Astrocyte of the cerebellum (primary cell): ENCODE measurements at regions of chr18 and their contacts with region 1.

Region 1: DNA sequence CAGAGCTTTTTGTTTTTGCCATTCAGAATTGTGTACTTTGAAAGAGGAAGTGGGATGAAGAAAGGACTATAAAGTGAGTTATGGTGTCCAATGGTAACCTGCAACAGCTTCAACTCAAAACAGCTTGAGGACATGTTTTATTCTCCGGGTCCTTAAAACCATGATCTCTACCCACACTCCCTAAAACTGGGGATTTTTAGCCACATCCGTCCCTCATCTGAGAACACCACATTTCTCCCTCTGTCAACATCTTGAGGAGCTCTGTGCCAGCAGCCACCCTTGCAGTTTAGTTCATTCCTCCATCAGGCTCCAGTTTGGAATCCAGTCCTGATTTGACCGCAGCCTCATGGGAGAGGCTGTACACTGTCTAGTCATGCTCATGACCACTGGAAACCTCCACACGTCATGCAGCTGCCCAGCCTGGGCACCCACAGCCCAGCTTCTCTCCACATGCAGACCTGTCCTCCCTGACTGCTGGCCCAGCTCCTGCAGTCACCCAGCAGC is 62.6 kb downstream of the C18orf63 start:
- DNase-seq: no peak
- H3K4me3 ChIP-seq: no peak overlapping the region
- CTCF ChIP-seq: no peak

Region 2: DNA sequence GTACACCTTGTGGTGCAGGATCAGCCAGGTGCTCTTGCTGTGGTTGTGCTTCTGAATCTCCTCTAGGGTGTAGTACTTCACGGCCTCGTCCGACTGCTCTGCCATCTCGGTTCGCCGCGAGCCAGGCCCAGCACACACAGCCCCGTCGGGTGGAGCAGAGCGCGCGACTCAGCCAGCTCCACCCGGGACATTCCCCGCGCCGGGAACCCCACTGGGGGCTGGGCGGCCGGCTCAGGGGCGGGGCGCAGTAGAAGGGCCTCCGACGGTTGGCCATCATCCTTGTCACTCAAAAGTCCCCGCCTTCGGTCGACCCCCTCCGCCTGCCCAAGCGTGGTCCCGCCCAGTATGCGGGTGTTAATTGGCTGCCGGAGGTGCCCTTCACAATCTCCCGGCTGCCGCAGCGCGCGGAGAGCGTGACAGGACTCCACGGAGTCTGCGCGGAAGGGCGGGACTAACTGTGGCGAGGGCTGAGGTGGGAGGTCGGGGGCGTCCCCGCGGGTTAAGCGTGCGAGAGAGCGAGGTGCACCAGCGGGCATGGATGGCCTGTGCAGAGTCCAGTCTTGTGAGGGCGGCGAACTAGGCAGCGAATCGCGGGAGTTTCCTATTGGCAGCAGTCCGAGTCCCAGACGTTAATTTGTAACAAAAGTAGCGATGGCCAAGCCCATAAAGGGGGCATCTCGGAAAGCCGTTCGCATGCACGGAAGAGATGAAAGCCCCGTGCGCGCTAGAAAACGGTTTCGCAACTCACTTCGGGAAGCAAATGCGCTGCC is 86.3 kb before region 1 on chr18 and contains the start of gene CYB5A:
- in situ Hi-C with region 1: no loop called
- DNase-seq: peak; percentile 89
- H3K4me3 ChIP-seq: peak within 1 kb of the TSS; percentile 75
- CTCF ChIP-seq: peak; percentile 28

Region 3: DNA sequence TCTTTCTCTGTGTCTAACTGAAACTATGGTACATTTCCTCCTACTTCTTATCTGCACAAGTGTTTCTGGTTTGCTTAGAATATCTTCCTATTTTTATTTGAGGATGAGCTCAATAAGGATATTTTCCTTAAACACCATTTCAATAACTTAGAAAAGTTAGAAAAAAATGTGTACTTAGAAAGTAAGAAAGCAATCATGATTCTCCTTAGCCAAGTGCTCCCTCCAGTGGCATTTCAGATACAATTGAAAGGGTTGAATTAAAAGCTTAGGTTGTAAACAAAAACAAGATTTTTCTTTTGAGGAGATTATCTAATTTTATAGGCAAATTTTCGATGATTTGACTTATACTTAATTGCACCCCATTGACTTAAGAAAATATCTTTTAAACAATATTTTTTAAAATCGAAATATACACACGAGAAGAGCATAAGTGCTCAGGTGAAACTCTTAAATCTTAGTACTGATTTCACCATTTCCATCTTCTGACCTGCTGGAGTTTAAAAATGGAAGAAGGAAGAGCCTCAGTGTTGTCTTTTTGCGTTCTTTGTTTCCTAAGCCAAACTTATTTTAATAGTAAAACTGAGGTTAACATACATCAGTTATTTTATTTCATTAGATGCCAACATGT is 35.7 kb before region 1 on chr18:
- in situ Hi-C with region 1: no loop called
- DNase-seq: peak; percentile 72
- H3K4me3 ChIP-seq: no peak overlapping the region
- CTCF ChIP-seq: peak; percentile 45

Region 4: DNA sequence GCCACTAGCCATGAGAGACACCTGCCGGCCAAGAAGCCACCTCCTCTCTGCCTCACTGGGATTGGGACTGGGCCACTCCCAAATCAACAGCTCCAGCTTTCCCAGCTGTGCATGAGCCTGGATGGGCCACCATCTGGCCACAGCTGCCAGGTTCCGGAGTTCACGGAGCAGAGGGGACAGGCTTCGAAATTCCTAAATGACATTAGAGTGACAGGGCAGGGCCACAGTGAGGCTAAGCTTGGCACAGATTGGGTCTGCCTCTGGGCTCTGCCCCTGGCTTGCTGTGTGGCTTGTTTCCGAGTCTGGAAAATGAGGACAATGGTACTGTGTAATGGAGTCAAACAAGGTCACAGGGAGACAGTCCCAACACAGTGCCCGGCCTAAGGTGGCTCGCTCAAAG is 72.4 kb after region 1 on chr18:
- in situ Hi-C with region 1: loop called (anchors 5 kb)
- DNase-seq: no peak
- H3K4me3 ChIP-seq: no peak overlapping the region
- CTCF ChIP-seq: no peak

Region 5: DNA sequence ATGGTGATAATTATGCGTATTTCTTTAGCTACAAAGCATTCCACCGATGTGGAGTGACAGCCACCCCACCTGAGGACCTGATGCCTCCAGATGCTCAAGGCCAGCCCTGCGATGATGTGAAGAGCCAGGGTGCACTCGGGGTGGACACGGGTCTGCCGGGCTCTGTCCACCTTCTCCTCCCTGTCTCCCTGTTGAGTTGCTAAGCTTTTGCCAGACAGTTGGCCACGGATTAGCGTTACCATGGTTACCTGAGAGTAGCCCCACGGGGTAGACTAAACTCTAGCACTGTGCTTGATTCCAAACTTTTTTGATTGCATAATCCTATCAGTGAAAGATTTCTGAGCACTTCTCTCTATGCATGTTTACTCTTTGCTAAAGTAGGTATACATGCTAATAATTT is 963.0 kb after region 1 on chr18:
- in situ Hi-C with region 1: no loop called
- DNase-seq: peak; percentile 51
- H3K4me3 ChIP-seq: no peak overlapping the region
- CTCF ChIP-seq: no peak